ENCODE measurements at regions of chr11 and their contacts with region 1.

Region 1: DNA sequence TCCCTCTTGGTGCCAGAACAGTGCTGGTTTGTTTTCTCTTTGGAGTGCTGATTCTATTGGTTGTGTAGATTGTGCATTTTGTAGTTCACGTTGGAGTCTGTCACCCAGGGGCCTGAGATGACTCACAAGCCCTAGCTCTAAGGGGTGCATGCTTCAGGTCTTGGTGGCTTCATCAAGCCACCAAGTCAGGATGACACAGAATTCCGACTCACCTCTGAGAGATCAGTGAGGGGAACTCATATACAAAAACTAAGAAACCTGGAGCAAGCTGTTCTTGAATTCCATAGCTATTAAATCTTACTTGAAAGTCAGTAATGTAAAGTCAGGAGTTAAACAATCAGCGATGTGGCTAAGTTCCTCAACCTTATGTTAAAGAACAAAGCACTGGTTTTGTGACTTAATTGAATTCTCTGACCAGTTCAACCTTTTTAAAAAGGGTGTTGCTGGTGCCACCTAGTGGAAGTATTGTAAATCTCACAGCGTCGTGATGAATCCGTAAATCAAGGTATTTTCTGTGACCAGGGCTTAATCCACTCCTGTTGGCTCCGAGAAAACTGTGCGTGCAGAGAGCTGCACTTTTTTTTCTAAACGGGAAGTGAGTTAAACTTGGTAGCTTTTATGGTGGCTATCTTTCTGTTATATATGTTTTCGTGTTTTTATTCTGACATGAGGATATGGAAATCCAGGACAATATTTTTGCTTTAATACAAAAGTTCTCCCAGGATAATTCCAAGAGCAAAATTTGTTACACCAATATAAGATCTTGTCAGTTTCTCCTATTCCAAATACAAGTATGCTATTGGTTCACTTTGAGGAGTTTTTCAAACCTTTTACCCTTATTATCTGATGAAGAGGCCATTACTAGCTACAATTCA is 14.6 kb downstream of the MMP13 start:
- DNase-seq: peak; percentile 60
- ATAC-seq: peak; percentile 86
- H3K4me3 Mint-ChIP-seq: no peak overlapping the region
- H3K27ac Mint-ChIP-seq: no peak overlapping the region
- H3K4me1 Mint-ChIP-seq: no peaks in the 10 kb centered on the region
- H3K27me3 Mint-ChIP-seq: peaks cover 5% of the 10 kb centered on the region
- CTCF ChIP-seq: peak; percentile 88

Region 2: GRCh38 chr11:102647430-102647829 is 293.5 kb before region 1 on chr11:
- CTCF ChIA-PET with region 1: no interaction called
- POLR2A ChIA-PET with region 1: no interaction called
- intact Hi-C with region 1: no loop called
- DNase-seq: no peak
- ATAC-seq: no peak
- H3K4me3 Mint-ChIP-seq: no peak overlapping the region
- H3K27ac Mint-ChIP-seq: no peak overlapping the region
- H3K4me1 Mint-ChIP-seq: no peaks in the 10 kb centered on the region
- H3K27me3 Mint-ChIP-seq: peaks cover 9% of the 10 kb centered on the region
- CTCF ChIP-seq: no peak

Region 3: GRCh38 chr11:102733232-102733875 is 207.6 kb before region 1 on chr11:
- CTCF ChIA-PET with region 1: interaction called, 15 read pairs
- POLR2A ChIA-PET with region 1: no interaction called
- intact Hi-C with region 1: loop called (anchors 5 kb)
- DNase-seq: peak; percentile 71
- ATAC-seq: peak; percentile 53
- H3K4me3 Mint-ChIP-seq: no peak overlapping the region
- H3K27ac Mint-ChIP-seq: no peak overlapping the region
- H3K4me1 Mint-ChIP-seq: no peaks in the 10 kb centered on the region
- H3K27me3 Mint-ChIP-seq: peaks cover 22% of the 10 kb centered on the region
- CTCF ChIP-seq: peak; percentile 72

Region 4: DNA sequence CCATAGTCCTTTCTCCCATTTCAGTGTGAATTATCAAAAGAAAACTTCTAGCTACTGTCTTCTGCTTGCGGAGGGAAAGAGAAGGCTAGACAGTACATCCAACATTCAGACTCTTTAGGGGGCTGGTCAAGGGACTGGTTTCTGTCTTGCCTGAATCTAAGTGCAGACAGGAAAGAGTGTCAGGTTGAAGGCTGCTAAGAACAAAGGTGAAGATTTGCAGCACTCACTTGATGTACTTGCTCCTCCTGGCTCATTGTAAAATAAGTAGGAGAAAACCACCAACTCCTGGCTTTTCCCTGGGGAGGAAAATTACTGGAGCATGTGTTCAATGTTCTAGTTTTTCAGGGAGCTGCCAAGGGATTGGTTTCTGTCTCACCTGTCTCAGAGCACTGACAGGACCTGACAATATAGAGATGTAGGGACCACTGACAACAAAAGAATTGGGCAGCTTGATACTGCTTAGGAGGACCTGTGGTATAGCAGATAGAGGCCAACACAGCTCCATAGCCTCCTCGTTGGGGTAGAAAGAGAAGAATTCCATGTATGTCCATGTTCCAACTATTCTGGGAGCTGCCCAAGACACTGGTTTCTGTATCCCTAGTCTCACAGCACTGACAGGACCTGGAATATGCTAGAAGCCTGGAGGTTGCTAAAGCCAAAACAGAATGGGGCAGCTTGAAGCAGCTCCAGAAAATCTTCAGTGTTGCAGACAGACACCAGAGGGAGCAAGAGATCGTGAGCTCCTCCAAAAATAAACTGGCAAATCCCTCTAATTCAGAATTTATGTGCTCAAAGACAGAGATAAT is 26.5 kb before region 1 on chr11:
- CTCF ChIA-PET with region 1: interaction called, 19 read pairs
- POLR2A ChIA-PET with region 1: no interaction called
- intact Hi-C with region 1: no loop called
- DNase-seq: peak; percentile 15
- ATAC-seq: no peak
- H3K4me3 Mint-ChIP-seq: no peak overlapping the region
- H3K27ac Mint-ChIP-seq: no peak overlapping the region
- H3K4me1 Mint-ChIP-seq: no peaks in the 10 kb centered on the region
- H3K27me3 Mint-ChIP-seq: peaks cover 3% of the 10 kb centered on the region
- CTCF ChIP-seq: no peak

Region 5: DNA sequence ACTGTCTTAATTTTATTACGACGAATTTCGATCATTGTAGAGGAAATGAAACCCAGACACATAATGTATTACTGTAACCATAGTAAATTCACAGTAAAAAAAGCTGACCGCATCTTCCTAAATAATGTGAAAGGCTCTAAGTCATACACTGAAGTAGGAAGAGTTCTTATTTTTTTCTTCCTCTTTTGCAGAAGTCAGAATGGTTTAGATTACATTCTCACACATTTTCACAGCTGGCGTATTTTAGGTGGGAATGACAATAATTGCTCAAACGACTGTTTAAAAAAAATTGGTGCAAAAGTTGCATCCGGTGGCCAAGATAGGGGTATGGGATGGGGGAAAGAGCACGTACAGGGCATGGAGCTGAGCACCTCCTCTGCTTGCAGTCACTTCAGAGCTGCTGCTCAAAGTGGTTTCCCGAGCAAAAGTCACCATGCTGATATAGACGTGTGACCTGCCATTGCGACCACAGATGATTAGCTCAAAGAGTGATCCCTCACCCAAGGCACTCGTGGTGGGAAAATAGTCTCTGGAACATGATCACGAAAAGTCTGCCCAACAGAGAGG is 20.8 kb before region 1 on chr11:
- CTCF ChIA-PET with region 1: interaction called, 19 read pairs
- POLR2A ChIA-PET with region 1: no interaction called
- intact Hi-C with region 1: no loop called
- DNase-seq: peak; percentile 3
- ATAC-seq: no peak
- H3K4me3 Mint-ChIP-seq: no peak overlapping the region
- H3K27ac Mint-ChIP-seq: no peak overlapping the region
- H3K4me1 Mint-ChIP-seq: peaks cover 5% of the 10 kb centered on the region
- H3K27me3 Mint-ChIP-seq: peaks cover 14% of the 10 kb centered on the region
- CTCF ChIP-seq: no peak

Region 6: DNA sequence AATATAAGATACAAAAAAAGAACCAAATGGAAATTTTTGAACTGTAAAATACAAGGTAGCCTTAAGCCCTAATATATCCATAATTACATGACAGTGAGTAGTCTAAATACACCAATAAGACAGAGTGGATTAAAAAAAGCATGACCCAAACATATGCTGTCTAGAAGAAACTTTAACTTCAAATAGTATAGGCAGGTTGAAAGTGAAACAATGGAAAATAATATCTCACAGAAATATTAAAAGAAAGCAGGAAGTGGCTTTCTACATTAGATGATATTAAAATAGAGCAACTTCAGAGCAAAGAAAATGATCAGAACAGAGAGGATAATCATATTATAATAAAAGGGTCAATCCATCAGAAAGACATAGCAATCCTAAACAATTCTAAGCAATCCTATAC is 129.2 kb after region 1 on chr11:
- CTCF ChIA-PET with region 1: no interaction called
- POLR2A ChIA-PET with region 1: no interaction called
- intact Hi-C with region 1: no loop called
- DNase-seq: no peak
- ATAC-seq: peak; percentile 73
- H3K4me3 Mint-ChIP-seq: no peak overlapping the region
- H3K27ac Mint-ChIP-seq: peak overlapping the region; percentile 80
- H3K4me1 Mint-ChIP-seq: peaks cover 52% of the 10 kb centered on the region
- H3K27me3 Mint-ChIP-seq: no peaks in the 10 kb centered on the region
- CTCF ChIP-seq: no peak